ENCODE measurements at regions of chr19 and their contacts with region 1.

Region 1: DNA sequence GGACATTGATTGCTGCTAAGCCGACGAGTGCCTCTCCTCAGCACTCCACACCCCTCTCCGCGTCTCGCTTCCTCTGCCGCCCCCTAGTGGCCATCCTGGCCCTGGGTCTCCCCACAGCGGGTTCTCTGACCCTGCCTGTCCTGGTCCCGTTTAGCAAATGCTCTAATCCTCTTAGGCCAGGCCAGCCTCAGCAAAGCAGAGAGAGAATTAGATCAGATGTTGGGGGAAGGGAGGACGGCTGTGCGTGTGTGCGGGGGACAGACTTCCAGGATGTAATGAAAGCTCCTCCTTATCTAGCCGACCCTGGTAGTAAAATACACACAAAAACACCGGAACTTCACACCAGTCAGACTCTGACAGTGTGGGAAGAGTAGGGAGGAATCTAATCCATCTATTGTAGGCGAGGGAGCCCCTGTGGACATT is 4.5 kb downstream of the TPRX2 start:
- DNase-seq: peak; percentile 89

Region 2: DNA sequence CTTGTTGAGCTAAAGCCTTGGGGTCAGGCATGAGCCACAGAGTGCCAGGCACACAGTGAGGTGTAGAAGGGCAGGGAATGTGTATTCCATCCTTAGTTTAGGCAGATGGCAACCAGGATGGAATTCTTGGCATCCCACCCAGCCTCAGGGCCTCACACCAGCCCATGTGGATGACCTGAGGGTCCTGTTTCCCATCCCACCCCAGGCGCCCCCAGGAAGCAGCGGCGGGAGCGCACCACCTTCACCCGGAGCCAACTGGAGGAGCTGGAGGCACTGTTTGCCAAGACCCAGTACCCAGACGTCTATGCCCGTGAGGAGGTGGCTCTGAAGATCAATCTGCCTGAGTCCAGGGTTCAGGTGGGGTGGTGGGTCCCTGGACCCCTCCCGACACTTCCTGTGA is 27.5 kb before region 1 on chr19:
- CTCF ChIA-PET with region 1: no interaction called
- POLR2A ChIA-PET with region 1: no interaction called
- DNase-seq: no peak

Region 3: DNA sequence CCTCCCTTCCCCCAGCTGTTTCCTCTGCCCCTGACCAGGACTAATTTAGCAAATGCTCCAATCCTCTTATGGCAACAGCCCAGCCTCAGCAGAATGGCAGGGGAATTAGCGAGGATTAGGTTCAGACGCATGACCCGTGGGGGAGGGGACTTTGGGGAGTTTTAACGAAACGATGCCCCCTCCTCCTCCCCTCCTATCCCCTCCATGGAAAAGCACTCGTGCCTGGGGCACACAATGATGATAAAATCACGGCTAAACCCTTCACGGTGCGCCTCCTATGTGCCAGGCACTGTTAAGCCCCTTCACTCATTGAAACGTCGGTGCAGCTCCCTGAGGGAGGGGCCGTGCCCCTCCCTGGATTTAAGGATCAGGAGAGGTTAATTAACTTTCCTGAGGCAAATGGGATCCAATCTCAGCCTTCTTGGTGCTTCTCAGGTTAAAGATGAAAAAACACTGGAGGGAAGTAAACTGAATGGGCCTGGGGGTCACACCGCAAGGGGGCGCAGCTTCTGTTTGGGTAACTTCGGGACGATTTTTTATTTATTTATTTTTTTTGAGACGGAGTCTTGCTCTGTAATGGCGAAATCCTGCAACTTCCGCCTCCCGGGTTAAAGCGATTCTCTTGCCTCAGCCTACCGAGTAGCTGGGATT is 14.6 kb before region 1 on chr19:
- CTCF ChIA-PET with region 1: interaction called, 12 read pairs
- POLR2A ChIA-PET with region 1: no interaction called
- DNase-seq: peak; percentile 58

Measured in HEK293T (cell line).